Heart left ventricle (tissue), 16 donors: ENCODE measurements at regions of chr1 and their contacts with region 1.

Region 1: GRCh38 chr1:183148599-183148998 is 37.5 kb upstream of the LAMC2 start:
- DNase-seq: no peak
- ATAC-seq: peak; percentile 63 to 83 (median 72)
- H3K4me3 ChIP-seq: no peak overlapping the region
- H3K27ac ChIP-seq: peak overlapping the region in 9 of 12 donors; percentile 3 to 61 (median 33)
- H3K4me1 ChIP-seq: peaks cover 0 to 19% (median 10%) of the 10 kb centered on the region in 12 donors
- H3K27me3 ChIP-seq: no peaks in the 10 kb centered on the region
- CTCF ChIP-seq: no peak
- POLR2A ChIP-seq: no peak

Region 2: DNA sequence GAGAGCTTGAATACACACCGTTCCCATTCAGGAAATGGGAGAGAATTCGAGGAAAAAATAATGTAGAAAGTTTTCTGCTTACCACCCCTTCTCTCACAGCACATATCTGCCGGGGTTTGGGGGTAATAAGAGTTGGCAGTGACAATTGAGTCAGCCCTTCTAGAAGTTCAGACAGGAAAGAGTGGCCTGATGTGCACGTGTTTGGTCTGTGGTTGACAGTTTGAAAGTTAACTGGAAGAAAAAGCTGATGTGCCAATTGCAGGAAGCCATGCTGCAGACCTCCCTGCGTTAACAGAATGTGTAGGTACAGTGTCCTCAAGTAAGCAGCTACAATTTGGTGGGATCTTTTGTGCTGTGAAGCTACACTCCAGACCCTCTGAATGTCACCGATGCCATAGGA is 258.6 kb before region 1 on chr1:
- intact Hi-C with region 1: loop called in 1 of 10 experiments (anchors 10 kb)
- DNase-seq: no peak
- ATAC-seq: no peak
- H3K4me3 ChIP-seq: no peak overlapping the region
- H3K27ac ChIP-seq: peak overlapping the region in 1 of 12 donors; percentile 2
- H3K4me1 ChIP-seq: no peaks in the 10 kb centered on the region
- H3K27me3 ChIP-seq: no peaks in the 10 kb centered on the region
- CTCF ChIP-seq: no peak
- POLR2A ChIP-seq: no peak

Region 3: DNA sequence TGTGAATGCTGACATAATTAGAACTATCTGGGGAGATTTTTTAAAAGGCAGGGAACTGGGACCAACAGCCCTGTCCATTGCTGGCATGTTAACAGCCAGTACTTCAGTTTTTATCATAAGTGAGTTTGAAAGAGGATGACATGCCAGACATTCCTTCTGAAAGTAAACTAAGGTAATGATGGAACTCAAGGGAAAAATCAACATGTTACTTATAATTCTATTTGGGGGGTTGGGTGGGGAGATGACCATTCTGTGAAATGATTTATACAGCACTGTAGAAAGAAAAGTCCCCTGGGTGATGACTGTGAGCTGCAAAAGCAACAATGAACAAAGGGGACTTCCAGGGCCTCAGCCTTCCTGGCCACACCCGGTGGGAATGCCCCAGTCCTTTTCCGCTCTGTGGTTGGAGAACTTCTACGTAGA is 32.0 kb after region 1 on chr1:
- intact Hi-C with region 1: loop called in 1 of 10 experiments (anchors 5 kb)
- DNase-seq: peak; percentile 61 to 82 (median 70)
- ATAC-seq: peak; percentile 80 to 93 (median 91)
- H3K4me3 ChIP-seq: peak overlapping the region in 2 of 12 donors; percentile 3 to 9
- H3K27ac ChIP-seq: peak overlapping the region; percentile 33 to 82 (median 73)
- H3K4me1 ChIP-seq: peaks cover 3 to 34% (median 20%) of the 10 kb centered on the region in 12 donors
- H3K27me3 ChIP-seq: peaks cover 0 to 2% (median 0%) of the 10 kb centered on the region in 9 donors
- CTCF ChIP-seq: no peak
- POLR2A ChIP-seq: no peak

Region 4: DNA sequence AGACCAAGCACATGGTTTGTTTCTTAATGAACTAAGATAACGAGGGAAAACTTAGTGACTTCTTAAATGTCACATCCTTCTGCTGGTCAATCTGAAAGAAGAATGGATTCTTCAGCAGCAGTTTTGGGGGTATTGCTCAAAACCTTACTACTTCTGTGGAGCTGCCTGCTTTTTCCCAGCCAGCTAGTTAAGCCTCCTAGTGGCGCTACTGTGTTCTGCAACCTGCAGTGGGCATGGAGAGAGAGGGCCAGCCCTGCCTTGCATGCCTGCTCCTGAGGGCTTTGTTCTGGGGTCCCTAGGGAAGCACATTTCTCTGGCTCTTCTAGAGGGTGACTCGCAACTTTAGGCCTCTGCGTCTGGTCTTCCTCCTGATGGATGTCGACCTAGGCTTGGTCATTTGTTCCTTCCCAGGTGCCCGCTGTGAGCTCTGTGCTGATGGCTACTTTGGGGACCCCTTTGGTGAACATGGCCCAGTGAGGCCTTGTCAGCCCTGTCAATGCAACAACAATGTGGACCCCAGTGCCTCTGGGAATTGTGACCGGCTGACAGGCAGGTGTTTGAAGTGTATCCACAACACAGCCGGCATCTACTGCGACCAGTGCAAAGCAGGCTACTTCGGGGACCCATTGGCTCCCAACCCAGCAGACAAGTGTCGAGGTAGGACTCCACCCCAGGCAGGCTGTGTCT is 79.5 kb after region 1 on chr1:
- intact Hi-C with region 1: loop called in 5 of 10 experiments (anchors 5 to 10 kb)
- DNase-seq: peak in 4 of 5 donors; percentile 42 to 55 (median 51)
- ATAC-seq: peak; percentile 20 to 76 (median 66)
- H3K4me3 ChIP-seq: no peak overlapping the region
- H3K27ac ChIP-seq: no peak overlapping the region
- H3K4me1 ChIP-seq: peaks cover 0 to 5% (median 0%) of the 10 kb centered on the region in 12 donors
- H3K27me3 ChIP-seq: no peaks in the 10 kb centered on the region
- CTCF ChIP-seq: peak; percentile 69 to 81 (median 76)
- POLR2A ChIP-seq: no peak

Region 5: DNA sequence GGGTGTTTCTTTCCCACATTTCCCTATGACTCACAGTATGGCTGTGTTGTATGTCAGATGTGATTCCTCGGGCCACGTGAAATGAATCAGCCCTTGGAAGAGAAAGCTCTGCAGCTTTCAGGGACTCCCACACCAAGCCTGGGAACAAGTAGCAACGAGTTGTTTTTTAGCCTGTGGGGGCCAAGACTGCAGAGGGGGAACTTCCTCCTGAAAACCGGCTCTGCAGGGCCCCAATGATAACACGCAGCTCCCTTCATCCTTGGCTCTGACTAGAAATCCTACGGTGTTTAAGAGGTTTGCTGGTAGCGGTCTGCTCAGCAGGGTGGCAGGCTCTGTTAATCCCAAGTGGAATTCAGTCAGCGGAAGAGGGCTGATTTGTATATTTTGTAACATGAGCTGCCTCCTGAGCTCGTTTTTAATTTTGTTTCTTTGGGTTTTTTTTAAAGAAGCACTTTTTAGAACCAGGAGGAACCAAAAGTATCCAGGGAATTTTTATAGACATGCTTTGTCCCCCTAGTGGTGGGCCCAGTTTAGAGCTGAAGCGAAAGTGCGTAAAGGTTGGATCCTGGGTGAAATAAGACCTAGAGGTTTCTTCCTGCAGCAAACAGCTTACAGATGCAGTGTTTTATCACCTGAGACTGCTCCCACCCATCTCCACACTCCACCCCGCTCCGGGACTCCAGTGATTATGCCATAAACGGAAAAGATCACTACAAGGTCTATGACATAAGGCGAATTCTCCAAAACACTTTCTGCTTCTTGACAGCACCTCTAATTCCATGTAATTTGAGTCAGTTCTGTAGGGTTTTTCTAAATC is 86.3 kb after region 1 on chr1:
- intact Hi-C with region 1: loop called in 4 of 10 experiments (anchors 5 to 10 kb)
- DNase-seq: peak in 4 of 5 donors; percentile 68 to 76 (median 70)
- ATAC-seq: peak; percentile 70 to 92 (median 92)
- H3K4me3 ChIP-seq: peak overlapping the region in 10 of 12 donors; percentile 12 to 51 (median 32)
- H3K27ac ChIP-seq: peak overlapping the region; percentile 33 to 83 (median 72)
- H3K4me1 ChIP-seq: peaks cover 0 to 41% (median 10%) of the 10 kb centered on the region in 12 donors
- H3K27me3 ChIP-seq: no peaks in the 10 kb centered on the region
- CTCF ChIP-seq: peak in 11 of 12 donors; percentile 34 to 74 (median 59)
- POLR2A ChIP-seq: no peak